Dendritic cell treated with granulocyte-macrophage colony-stimulating factor and Interleukin-4, amounts not matched to agents 40 ng/mL and 50 ng/mL, for 4 days (primary cell): ENCODE measurements at regions of chr12 and their contacts with region 1.

Region 1: DNA sequence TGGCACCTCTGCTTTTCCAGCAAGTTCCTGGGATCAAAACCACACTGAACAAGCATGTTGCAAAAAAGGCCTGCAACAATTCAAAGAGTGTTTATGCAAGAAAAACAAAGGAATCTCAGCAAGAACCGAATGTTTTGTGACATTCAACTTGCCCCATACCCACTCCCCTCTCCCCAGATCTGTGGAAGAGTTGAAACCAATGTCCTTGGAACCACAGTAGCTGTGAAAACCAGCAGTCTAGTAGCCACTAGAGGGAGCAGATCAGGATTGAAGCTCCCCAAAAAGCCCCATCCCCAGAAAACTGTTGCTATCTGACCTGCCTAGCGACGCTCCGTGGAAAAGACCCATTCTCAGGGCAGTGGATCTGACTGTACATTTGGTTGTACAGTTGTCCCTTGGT is 27.1 kb downstream of the PRKAB1 start:
- H3K4me3 Mint-ChIP-seq: no peak overlapping the region
- H3K27ac Mint-ChIP-seq: no peak overlapping the region
- H3K4me1 Mint-ChIP-seq: no peaks in the 10 kb centered on the region
- H3K27me3 Mint-ChIP-seq: no peaks in the 10 kb centered on the region

Region 2: GRCh38 chr12:119902084-119902509 is 207.1 kb after region 1 on chr12:
- intact Hi-C with region 1: loop called (anchors 5 kb)
- H3K4me3 Mint-ChIP-seq: no peak overlapping the region
- H3K27ac Mint-ChIP-seq: no peak overlapping the region
- H3K4me1 Mint-ChIP-seq: no peaks in the 10 kb centered on the region
- H3K27me3 Mint-ChIP-seq: peaks cover 5% of the 10 kb centered on the region